Endothelial cell of umbilical vein (primary cell): ENCODE measurements at regions of chr19 and their contacts with region 1.

Region 1: DNA sequence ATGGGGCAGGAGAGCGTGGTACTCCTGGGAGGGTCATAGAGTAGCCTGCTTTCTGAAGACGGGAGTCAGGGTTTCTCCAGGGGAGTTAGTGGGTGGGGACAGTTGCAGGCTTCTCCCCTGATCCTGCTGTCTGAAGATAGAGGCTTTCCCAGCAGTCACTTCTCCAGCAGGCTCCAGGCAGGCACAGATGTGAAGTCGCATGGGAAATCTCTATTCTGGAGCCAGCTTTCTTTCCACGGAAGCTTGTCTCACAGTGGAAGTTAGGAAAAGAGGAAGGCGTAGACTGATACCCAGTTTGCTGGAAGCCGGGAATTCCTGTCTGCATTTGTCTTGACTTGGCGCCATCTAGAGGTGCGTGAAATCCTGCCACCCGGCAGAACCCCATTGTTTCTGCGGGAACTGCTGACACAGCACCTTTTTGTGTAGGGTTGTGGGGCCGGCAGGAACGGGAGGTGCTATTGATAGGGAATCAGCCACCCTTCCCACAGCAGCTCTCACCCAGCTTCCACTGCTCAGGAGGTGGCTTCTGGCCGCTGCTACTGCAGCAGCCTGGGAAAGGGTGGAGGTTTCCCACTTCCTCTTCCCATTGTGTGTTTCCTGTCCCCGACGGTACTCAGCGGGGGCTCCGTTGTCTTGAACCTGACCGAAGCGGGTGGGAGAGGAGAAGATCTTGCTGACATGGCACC is 28.5 kb upstream of the NPAS1 start:
- DNase-seq: peak; percentile 83
- H3K4me3 ChIP-seq: no peak overlapping the region
- H3K27ac ChIP-seq: no peak overlapping the region
- H3K4me1 ChIP-seq: peaks cover 11% of the 10 kb centered on the region
- H3K27me3 ChIP-seq: no peaks in the 10 kb centered on the region
- CTCF ChIP-seq: peak; percentile 87 to 95
- POLR2A ChIP-seq: no peak

Region 2: GRCh38 chr19:46840136-46840942 is 150.8 kb before region 1 on chr19:
- CTCF ChIA-PET with region 1: interaction called, 28 read pairs
- POLR2A ChIA-PET with region 1: no interaction called
- dilution Hi-C with region 1: no loop called
- intact Hi-C with region 1: no loop called
- DNase-seq: peak; percentile 64
- H3K4me3 ChIP-seq: no peak overlapping the region
- H3K27ac ChIP-seq: no peak overlapping the region
- H3K4me1 ChIP-seq: no peaks in the 10 kb centered on the region
- H3K27me3 ChIP-seq: no peaks in the 10 kb centered on the region
- CTCF ChIP-seq: peak; percentile 65 to 83
- POLR2A ChIP-seq: no peak

Region 3: GRCh38 chr19:46860125-46860845 is 130.8 kb before region 1 on chr19:
- CTCF ChIA-PET with region 1: interaction called, 126 read pairs
- POLR2A ChIA-PET with region 1: interaction called, 8 read pairs
- dilution Hi-C with region 1: no loop called
- intact Hi-C with region 1: loop called (anchors 1 kb)
- DNase-seq: peak; percentile 99
- H3K4me3 ChIP-seq: peak overlapping the region; percentile 16 to 81 (median 52)
- H3K27ac ChIP-seq: peak overlapping the region; percentile 76
- H3K4me1 ChIP-seq: peaks cover 33% of the 10 kb centered on the region
- H3K27me3 ChIP-seq: no peaks in the 10 kb centered on the region
- CTCF ChIP-seq: no peak
- POLR2A ChIP-seq: peak; percentile 38

Region 4: DNA sequence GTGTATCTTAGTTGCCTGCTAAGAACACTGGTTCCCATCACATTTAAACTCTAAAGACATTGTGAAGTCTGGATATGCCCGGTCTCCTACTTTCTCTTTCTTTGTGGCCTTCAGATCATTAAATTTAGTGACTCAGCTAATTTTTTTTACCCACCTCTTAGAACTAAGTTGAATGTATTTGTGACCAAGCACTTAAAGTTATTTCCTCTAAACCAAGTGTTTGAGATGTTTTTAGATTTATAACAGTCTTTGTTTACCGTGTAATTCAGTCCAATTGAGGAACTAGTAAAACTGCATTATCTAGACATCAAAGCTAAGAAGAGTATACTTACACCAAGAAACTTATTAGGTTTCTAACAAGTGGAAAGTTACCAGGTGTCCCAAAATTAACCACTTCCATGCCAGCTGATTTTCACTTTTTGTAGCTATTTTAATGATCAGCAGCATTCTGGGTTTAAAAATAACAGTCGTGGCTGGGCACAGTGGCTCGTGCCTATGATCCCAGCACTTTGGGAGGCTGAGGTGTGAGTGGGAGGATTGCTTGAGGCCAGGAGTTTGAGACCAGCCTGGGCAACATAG is 77.2 kb before region 1 on chr19:
- CTCF ChIA-PET with region 1: interaction called, 10 read pairs
- POLR2A ChIA-PET with region 1: no interaction called
- dilution Hi-C with region 1: no loop called
- intact Hi-C with region 1: no loop called
- DNase-seq: peak; percentile 64
- H3K4me3 ChIP-seq: peak overlapping the region in 1 of 3 experiments; percentile 1
- H3K27ac ChIP-seq: peak overlapping the region; percentile 5
- H3K4me1 ChIP-seq: peaks cover 15% of the 10 kb centered on the region
- H3K27me3 ChIP-seq: no peaks in the 10 kb centered on the region
- CTCF ChIP-seq: no peak
- POLR2A ChIP-seq: no peak

Region 5: GRCh38 chr19:46932346-46932745 is 58.8 kb before region 1 on chr19:
- CTCF ChIA-PET with region 1: interaction called, 16 read pairs
- POLR2A ChIA-PET with region 1: no interaction called
- dilution Hi-C with region 1: no loop called
- intact Hi-C with region 1: loop called (anchors 2 kb)
- DNase-seq: peak; percentile 70
- H3K4me3 ChIP-seq: no peak overlapping the region
- H3K27ac ChIP-seq: peak overlapping the region; percentile 40
- H3K4me1 ChIP-seq: peaks cover 45% of the 10 kb centered on the region
- H3K27me3 ChIP-seq: no peaks in the 10 kb centered on the region
- CTCF ChIP-seq: no peak
- POLR2A ChIP-seq: no peak

Region 6: DNA sequence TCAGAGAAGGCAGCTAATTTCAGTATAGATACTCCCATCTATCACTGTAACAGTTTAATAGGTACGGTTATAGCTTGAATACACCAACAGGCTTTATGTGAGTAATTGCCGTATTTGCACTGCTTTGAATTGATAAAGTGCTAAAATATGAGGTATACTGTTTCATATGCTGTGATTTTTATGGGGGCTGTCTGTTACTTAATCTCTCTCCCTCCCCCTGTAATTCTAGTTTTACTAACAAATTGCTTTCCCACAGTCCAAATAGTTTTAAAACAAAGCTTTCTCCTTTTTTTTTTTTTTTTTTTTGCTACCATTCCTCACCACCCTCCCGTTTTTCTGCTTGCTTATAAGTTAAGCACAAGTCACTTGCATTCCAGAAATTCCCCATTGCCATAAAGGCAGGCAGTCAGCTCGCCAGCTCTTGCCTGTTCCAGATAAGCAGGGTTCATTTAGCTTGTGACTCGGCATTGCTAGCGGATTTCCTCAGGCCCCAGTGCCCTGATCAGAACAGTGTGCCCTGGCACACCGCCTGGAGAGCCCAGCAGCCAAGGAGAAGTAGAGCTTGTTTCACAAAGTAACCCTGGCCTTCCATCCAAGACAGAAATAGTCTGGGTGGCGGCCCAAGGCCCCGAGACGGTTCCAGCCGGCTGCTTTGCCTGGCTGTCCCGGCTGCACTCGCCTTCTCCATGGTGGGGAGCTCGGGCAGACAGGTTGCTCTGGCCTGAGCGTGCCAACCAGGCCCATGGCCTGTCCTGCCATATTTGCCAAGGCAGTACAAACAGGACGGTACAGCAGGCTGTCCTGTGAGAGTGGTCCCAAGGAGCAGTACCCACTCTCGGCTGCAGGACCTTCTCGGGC is 15.0 kb before region 1 on chr19:
- CTCF ChIA-PET with region 1: interaction called, 58 read pairs
- POLR2A ChIA-PET with region 1: no interaction called
- dilution Hi-C with region 1: no loop called
- intact Hi-C with region 1: no loop called
- DNase-seq: peak; percentile 98
- H3K4me3 ChIP-seq: no peak overlapping the region
- H3K27ac ChIP-seq: peak overlapping the region; percentile 79
- H3K4me1 ChIP-seq: peaks cover 39% of the 10 kb centered on the region
- H3K27me3 ChIP-seq: no peaks in the 10 kb centered on the region
- CTCF ChIP-seq: no peak
- POLR2A ChIP-seq: no peak